Activated T-helper 2 cell treated with anti-CD3 and anti-CD28 coated beads, Interferon-gamma antibody, Interleukin-2, Interleukin-4, amounts not matched to agents 10 μg/mL and 5 μg/mL and 100 μg/mL, durations not matched to agents 14 hours and 24 hours and 36 hours (primary cell): ENCODE measurements at regions of chr1 and their contacts with region 1.

Region 1: DNA sequence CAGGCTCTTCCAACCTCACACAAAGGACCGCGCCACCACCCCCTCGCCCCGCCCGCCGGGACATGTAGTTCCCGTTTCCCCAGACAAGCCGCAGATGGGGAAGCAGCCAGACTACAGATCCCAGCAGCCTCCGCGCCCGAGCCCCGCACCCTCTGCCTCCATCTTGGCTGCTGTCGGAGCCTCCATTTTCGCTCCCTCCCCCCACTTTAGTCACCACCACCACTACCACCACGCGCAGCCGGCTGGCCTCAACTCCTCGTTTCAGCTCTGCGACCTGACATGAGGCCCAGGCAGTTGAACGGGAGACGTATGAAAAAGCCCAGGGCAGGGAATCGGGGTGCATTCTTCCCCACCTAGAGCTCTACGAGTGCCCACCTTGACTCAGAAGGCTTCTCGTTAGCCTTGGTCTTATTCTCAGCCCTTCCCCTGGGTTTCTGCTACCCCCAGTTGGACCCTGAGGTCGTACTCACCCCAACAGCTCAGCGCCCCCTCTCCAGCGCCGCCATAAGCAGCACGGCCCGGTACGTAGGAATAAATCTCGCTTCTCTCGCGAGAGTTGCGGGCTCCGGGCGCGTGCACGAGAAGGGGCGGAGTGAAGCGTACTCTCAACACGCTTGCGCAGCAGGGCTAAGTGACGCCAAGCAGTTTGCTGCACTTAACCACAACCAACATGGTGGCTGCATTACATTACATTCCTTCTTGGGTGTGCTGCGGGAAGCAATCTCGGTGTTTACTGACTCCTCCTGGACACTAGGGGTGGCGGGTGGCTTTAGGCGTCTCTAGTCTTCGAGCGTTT is at the start of gene CSDE1:
- DNase-seq: peak; percentile 96
- H3K4me3 Mint-ChIP-seq: peak within 1 kb of the TSS; percentile 97
- H3K27ac Mint-ChIP-seq: peak within 1 kb of the TSS; percentile 99
- H3K4me1 Mint-ChIP-seq: peaks cover 53% of the 10 kb centered on the region
- H3K27me3 Mint-ChIP-seq: no peaks in the 10 kb centered on the region
- total RNA-seq, gene CSDE1: 411 and 414 TPM in 2 replicates

Region 2: DNA sequence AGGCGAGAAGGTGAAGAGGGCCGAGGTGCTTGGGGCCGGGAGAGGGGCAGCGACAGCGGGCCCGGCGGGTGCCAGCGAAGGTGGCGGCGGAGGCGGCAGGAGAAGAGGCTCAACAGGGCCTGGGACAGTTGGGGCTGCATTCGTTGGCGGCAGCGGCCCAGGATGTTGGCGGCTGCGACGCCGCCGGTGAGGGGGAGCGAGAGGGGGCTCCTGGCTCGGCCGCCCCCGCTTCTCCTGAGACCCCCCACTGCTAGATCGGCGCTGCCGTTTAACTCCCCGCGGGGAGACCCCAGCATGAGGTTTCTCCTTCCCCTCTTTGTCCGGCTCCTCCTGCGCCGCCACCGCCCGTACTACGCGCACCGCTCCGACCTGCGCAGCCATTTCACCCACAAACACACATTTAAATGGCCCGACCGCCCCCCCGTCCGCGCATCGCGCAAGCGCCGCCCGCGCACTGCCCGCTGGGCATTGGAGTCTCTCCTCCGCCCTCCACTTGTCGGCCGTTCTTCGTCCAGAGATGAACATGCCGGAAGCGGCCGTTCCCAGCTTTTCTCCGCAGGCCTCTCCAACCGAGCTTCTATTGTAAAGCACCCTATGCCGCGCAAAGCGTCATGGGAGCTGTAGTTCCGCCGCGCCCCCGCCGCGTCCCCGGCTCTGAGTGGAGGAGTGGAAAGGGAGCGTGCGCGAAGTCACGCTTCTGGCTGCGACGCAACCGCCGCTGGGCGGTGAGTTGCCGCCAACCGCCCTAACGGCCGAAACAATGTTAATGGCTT is 945.6 kb before region 1 on chr1 and contains the start of gene RSBN1:
- intact Hi-C with region 1: loop called (anchors 1 kb)
- DNase-seq: peak; percentile 99
- H3K4me3 Mint-ChIP-seq: peak within 1 kb of the TSS; percentile 97
- H3K27ac Mint-ChIP-seq: peak within 1 kb of the TSS; percentile 95
- H3K4me1 Mint-ChIP-seq: peaks cover 27% of the 10 kb centered on the region
- H3K27me3 Mint-ChIP-seq: no peaks in the 10 kb centered on the region
- total RNA-seq, gene RSBN1: 21.5 and 23.4 TPM in 2 replicates

Region 3: GRCh38 chr1:114581335-114582287 is 176.0 kb before region 1 on chr1 and contains the start of gene BCAS2:
- intact Hi-C with region 1: loop called (anchors 1 kb)
- DNase-seq: peak; percentile 95
- H3K4me3 Mint-ChIP-seq: peak within 1 kb of the TSS; percentile 95
- H3K27ac Mint-ChIP-seq: peak within 1 kb of the TSS; percentile 97
- H3K4me1 Mint-ChIP-seq: peaks cover 17% of the 10 kb centered on the region
- H3K27me3 Mint-ChIP-seq: peaks cover 2% of the 10 kb centered on the region
- total RNA-seq, gene BCAS2: 52.1 and 54.1 TPM in 2 replicates

Region 4: DNA sequence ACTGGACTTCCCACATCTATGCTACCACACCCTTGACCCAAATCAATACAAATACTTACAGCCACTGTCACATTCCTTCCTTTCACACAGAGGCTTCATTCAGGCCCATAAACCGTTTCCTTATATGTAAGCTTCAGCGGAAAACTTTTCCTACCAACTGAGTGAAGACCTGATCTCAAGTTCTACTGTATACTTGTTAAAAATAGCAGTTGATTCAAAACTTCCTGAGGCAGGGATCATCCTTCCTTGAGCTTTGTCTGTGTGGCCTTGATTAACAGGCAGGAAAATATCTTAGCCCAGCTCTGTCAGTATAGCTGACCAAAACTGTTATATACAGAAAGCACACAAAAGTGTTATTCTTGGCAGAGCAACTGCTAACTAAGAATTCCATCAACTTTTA is 130.5 kb before region 1 on chr1:
- intact Hi-C with region 1: no loop called
- DNase-seq: no peak
- H3K4me3 Mint-ChIP-seq: no peak overlapping the region
- H3K27ac Mint-ChIP-seq: no peak overlapping the region
- H3K4me1 Mint-ChIP-seq: no peaks in the 10 kb centered on the region
- H3K27me3 Mint-ChIP-seq: peaks cover 10% of the 10 kb centered on the region

Region 5: GRCh38 chr1:114716304-114717170 is 41.1 kb before region 1 on chr1 and contains the start of gene NRAS:
- intact Hi-C with region 1: loop called (anchors 1 kb)
- DNase-seq: peak; percentile 92
- H3K4me3 Mint-ChIP-seq: peak within 1 kb of the TSS; percentile 95
- H3K27ac Mint-ChIP-seq: peak within 1 kb of the TSS; percentile 93
- H3K4me1 Mint-ChIP-seq: peaks cover 26% of the 10 kb centered on the region
- H3K27me3 Mint-ChIP-seq: no peaks in the 10 kb centered on the region
- total RNA-seq, gene NRAS: 63.3 and 64.5 TPM in 2 replicates

Region 6: GRCh38 chr1:114780344-114781226 is 22.9 kb after region 1 on chr1 and contains the start of gene SIKE1:
- intact Hi-C with region 1: loop called (anchors 1 kb)
- DNase-seq: peak; percentile 93
- H3K4me3 Mint-ChIP-seq: peak within 1 kb of the TSS; percentile 99
- H3K27ac Mint-ChIP-seq: peak within 1 kb of the TSS; percentile 98
- H3K4me1 Mint-ChIP-seq: peaks cover 21% of the 10 kb centered on the region
- H3K27me3 Mint-ChIP-seq: peaks cover 6% of the 10 kb centered on the region
- total RNA-seq, gene SIKE1: 57.6 and 64.2 TPM in 2 replicates